ENCODE measurements at regions of chr15 and their contacts with region 1.

Region 1: DNA sequence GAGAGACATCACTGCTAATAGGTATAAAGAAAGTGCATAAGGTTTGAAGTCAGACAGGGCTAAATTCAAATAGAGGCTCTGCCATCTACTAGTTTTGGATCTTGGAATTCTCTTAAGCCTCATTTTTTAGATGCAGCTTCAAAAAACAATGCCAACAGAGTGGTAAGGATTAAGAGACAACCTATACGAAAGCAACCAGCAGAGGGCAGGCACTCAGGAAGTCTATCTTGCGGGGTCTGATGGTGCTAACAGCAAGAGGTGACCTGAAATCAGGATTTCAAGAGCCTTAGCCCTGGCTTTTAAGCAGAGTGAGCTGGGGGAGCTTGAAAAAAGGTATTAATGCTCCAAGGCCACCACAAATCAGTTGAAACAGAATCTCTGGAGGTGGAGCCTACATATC is 40.7 kb downstream of the LDHAL6B start:
- DNase-seq: peak; percentile 38
- H3K4me3 Mint-ChIP-seq: no peak overlapping the region
- H3K27ac Mint-ChIP-seq: no peak overlapping the region
- H3K4me1 Mint-ChIP-seq: peaks cover 27% of the 10 kb centered on the region
- H3K27me3 Mint-ChIP-seq: no peaks in the 10 kb centered on the region

Region 2: GRCh38 chr15:59299929-59300617 is 52.7 kb after region 1 on chr15:
- intact Hi-C with region 1: loop called (anchors 1 kb)
- DNase-seq: peak; percentile 64
- H3K4me3 Mint-ChIP-seq: peak overlapping the region; percentile 55
- H3K27ac Mint-ChIP-seq: peak overlapping the region; percentile 81
- H3K4me1 Mint-ChIP-seq: peaks cover 63% of the 10 kb centered on the region
- H3K27me3 Mint-ChIP-seq: peaks cover 3% of the 10 kb centered on the region

Region 3: DNA sequence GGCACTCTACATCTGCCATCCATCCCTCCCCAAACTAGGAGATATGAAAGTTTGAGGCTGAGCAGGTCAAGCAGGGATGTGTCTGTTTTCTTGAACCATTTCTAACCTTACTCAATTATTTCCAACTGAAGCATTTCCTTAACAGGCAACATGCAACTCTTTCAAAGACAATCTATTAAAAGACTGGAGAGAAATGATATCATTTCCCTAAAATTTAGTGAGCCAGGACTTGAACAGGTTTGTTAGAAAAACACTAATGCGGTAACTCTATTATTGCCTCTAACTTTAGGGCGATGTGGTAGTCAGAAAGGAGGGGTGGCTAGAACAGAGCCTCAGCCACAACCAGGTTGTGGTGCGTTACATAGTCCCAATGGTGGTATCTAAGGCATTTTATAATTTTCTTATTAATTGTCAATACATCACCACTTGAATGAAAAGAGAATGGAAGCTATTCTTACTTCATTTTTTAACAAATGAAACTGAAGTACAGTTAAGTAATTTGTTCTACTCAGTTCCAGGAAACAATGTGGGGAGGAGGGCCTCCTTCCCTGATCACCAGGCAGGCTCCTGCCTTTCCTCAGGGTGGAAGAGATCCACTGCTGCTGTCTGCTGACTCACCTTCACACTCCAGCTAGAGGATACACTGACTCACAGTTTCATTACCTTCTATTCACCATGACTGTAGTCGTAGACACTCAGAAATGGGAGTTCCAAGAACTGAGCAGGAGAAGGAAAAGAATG is 102.5 kb after region 1 on chr15:
- intact Hi-C with region 1: loop called (anchors 5 kb)
- DNase-seq: no peak
- H3K4me3 Mint-ChIP-seq: peak overlapping the region; percentile 26
- H3K27ac Mint-ChIP-seq: peak overlapping the region; percentile 68
- H3K4me1 Mint-ChIP-seq: peaks cover 60% of the 10 kb centered on the region
- H3K27me3 Mint-ChIP-seq: peaks cover 2% of the 10 kb centered on the region

Region 4: DNA sequence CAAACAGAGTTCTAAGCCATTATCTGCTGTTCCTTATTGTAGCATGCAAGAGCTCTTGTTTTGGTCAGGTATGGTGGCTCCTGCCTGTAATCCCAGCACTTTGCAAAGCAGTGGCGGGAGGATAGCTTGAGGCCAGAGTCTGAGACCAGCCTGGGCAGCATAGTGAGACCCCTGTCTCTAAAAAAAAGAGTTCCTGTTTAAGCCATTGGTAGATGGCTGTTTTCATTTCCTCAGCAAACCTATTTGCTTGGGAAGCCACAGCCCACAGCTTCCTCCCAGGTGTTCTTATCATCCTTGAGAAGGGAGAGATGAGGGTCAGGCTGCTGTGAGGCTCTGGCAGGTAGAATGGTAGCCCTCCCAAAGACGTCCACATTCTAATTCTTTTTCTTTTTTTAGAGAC is 166.2 kb after region 1 on chr15:
- intact Hi-C with region 1: loop called (anchors 2 kb)
- DNase-seq: no peak
- H3K4me3 Mint-ChIP-seq: no peak overlapping the region
- H3K27ac Mint-ChIP-seq: no peak overlapping the region
- H3K4me1 Mint-ChIP-seq: peaks cover 41% of the 10 kb centered on the region
- H3K27me3 Mint-ChIP-seq: peaks cover 33% of the 10 kb centered on the region

Region 5: GRCh38 chr15:59492389-59493377 is 245.3 kb after region 1 on chr15:
- intact Hi-C with region 1: loop called (anchors 1 kb)
- DNase-seq: peak; percentile 25
- H3K4me3 Mint-ChIP-seq: no peak overlapping the region
- H3K27ac Mint-ChIP-seq: no peak overlapping the region
- H3K4me1 Mint-ChIP-seq: no peaks in the 10 kb centered on the region
- H3K27me3 Mint-ChIP-seq: peaks cover 32% of the 10 kb centered on the region

Region 6: GRCh38 chr15:59528965-59529402 is 281.6 kb after region 1 on chr15:
- intact Hi-C with region 1: loop called (anchors 1 kb)
- DNase-seq: peak; percentile 56
- H3K4me3 Mint-ChIP-seq: no peak overlapping the region
- H3K27ac Mint-ChIP-seq: no peak overlapping the region
- H3K4me1 Mint-ChIP-seq: peaks cover 21% of the 10 kb centered on the region
- H3K27me3 Mint-ChIP-seq: peaks cover 7% of the 10 kb centered on the region

Region 7: DNA sequence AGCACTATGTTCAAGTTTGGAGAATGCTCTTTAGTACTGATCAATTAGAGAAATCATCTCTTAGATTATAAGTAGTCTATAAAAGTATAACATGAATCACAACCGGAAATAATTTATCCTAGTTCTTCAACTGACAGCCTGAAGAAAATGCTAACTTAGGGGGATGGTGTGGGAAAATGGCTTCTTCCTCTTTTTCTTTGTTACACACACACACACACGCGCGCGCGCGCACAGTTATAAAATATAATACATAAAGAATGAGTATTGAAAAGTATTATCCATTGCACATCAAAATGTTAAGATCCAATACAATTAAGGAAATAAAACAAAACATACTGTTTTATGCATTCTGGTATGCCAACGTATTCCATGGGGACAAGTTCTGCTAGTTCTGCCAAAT is 421.2 kb after region 1 on chr15:
- intact Hi-C with region 1: no loop called
- DNase-seq: no peak
- H3K4me3 Mint-ChIP-seq: no peak overlapping the region
- H3K27ac Mint-ChIP-seq: no peak overlapping the region
- H3K4me1 Mint-ChIP-seq: no peaks in the 10 kb centered on the region
- H3K27me3 Mint-ChIP-seq: no peaks in the 10 kb centered on the region